HCT116 (cell line): ENCODE measurements at regions of chr2 and their contacts with region 1.

Region 1: GRCh38 chr2:25041928-25042320 is at the start of gene EFR3B:
- DNase-seq: peak; percentile 68
- ATAC-seq: peak; percentile 98
- H3K4me3 ChIP-seq: peak within 1 kb of the TSS; percentile 50 to 68
- H3K27ac ChIP-seq: peak within 1 kb of the TSS; percentile 43; the same call in 1 of the 2 replicates
- H3K4me1 ChIP-seq: peaks cover 21 to 26% of the 10 kb centered on the region in 2 experiments
- H3K27me3 ChIP-seq: peaks cover 29% of the 10 kb centered on the region; the same call in 1 of the 2 replicates
- CTCF ChIP-seq: no peak
- POLR2A ChIP-seq: no peak
- RAD21 ChIP-seq: no peak
- total RNA-seq, gene EFR3B: 0.96 TPM

Region 2: DNA sequence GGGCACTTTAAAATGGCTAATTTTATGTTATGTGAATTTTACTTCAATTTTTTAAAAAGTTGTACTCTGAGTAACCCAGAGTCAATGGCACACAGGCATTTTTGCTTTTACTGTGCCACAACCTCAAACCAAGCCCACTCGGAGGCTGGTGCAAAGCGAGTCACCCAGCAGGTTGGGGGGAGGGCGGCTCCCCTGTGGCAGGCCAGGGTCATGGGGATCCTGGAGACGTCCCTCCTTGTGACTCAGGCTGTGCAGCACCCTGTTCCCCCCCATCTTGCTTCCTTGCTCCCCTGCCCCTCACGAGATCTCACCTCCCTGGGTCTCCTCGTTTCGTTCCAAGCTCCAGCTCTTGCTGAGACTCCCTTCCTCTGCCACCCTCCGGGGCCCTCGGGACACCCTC is 67.9 kb after region 1 on chr2:
- CTCF ChIA-PET with region 1: no interaction called
- POLR2A ChIA-PET with region 1: no interaction called
- RAD21 ChIA-PET with region 1: no interaction called
- intact Hi-C with region 1: loop called (anchors 5 kb)
- DNase-seq: no peak
- ATAC-seq: no peak
- H3K4me3 ChIP-seq: no peak overlapping the region
- H3K27ac ChIP-seq: no peak overlapping the region
- H3K4me1 ChIP-seq: peaks cover 3 to 30% of the 10 kb centered on the region in 2 experiments
- H3K27me3 ChIP-seq: no peaks in the 10 kb centered on the region
- CTCF ChIP-seq: no peak
- POLR2A ChIP-seq: no peak
- RAD21 ChIP-seq: no peak

Region 3: DNA sequence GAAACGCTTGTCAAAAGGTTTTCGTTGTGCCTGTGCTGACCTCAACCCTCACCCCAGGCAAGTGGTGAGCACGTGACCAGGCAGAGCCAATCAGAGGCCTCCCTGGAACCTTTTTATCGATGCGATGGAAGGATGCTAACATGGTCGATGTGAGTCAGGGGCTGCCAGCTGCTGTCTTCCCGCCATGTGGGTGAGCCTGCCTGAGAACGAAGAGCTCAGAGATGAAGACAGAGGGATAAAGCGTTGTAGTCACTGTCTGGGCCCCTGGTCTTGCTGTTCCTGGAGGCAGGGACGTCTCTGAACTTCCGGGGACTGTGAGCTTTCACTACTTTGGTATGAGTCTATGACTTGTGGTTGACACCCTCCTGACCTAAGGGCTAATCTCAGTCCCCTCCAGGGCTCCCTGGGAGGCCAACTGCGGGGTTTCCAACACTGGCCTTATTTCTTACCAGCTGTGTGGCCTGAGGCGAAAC is 281.2 kb after region 1 on chr2:
- CTCF ChIA-PET with region 1: no interaction called
- POLR2A ChIA-PET with region 1: no interaction called
- RAD21 ChIA-PET with region 1: no interaction called
- intact Hi-C with region 1: no loop called
- DNase-seq: no peak
- ATAC-seq: no peak
- H3K4me3 ChIP-seq: no peak overlapping the region
- H3K27ac ChIP-seq: no peak overlapping the region
- H3K4me1 ChIP-seq: no peaks in the 10 kb centered on the region
- H3K27me3 ChIP-seq: no peaks in the 10 kb centered on the region
- CTCF ChIP-seq: no peak
- POLR2A ChIP-seq: no peak
- RAD21 ChIP-seq: no peak